Naive thymus-derived CD4-positive, alpha-beta T cell (primary cell): ENCODE measurements at regions of chr7 and their contacts with region 1.

Region 1: GRCh38 chr7:38318803-38319416 is 45.5 kb upstream of the TARP start:
- DNase-seq: no peak
- ATAC-seq: peak; percentile 58
- H3K4me3 ChIP-seq: no peak overlapping the region
- H3K4me3 Mint-ChIP-seq: peak overlapping the region in 8 of 10 donors; percentile 2 to 77 (median 46)
- H3K27ac ChIP-seq: no peak overlapping the region
- H3K27ac Mint-ChIP-seq: peak overlapping the region; percentile 34 to 92 (median 81)
- H3K4me1 ChIP-seq: peaks cover 23 to 24% of the 10 kb centered on the region in 2 donors
- H3K4me1 Mint-ChIP-seq: peaks cover 5 to 50% (median 32%) of the 10 kb centered on the region in 7 donors
- H3K27me3 ChIP-seq: no peaks in the 10 kb centered on the region
- H3K27me3 Mint-ChIP-seq: no peaks in the 10 kb centered on the region

Region 2: DNA sequence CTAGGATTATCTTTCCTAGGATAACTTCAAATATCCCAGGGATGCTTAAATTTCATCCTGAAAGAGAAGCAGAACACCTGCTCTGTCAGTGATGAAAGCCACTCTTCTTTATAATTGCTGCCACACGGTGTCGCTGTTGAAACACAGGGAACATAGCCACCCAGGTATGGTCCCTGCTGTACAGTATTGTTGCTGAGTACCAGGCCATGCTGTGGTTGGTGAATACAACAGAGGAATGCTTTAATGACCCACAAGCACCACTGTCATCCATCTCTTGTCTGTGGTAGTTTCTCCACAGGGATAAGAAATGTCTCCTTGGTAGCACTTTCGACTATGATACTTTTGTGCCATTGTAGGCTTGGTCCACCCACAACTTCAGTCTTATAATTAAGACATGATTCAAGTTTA is 211.4 kb before region 1 on chr7:
- CTCF ChIA-PET with region 1: interaction called, 3 read pairs
- POLR2A ChIA-PET with region 1: no interaction called
- intact Hi-C with region 1: loop called (anchors 1 kb)
- DNase-seq: peak; percentile 16 to 58 (median 44)
- ATAC-seq: peak; percentile 88
- H3K4me3 ChIP-seq: no peak overlapping the region
- H3K4me3 Mint-ChIP-seq: no peak overlapping the region
- H3K27ac ChIP-seq: no peak overlapping the region
- H3K27ac Mint-ChIP-seq: no peak overlapping the region
- H3K4me1 ChIP-seq: no peaks in the 10 kb centered on the region
- H3K4me1 Mint-ChIP-seq: peaks cover 0 to 2% (median 0%) of the 10 kb centered on the region in 7 donors
- H3K27me3 ChIP-seq: no peaks in the 10 kb centered on the region
- H3K27me3 Mint-ChIP-seq: peaks cover 18 to 43% (median 23%) of the 10 kb centered on the region in 5 donors

Region 3: DNA sequence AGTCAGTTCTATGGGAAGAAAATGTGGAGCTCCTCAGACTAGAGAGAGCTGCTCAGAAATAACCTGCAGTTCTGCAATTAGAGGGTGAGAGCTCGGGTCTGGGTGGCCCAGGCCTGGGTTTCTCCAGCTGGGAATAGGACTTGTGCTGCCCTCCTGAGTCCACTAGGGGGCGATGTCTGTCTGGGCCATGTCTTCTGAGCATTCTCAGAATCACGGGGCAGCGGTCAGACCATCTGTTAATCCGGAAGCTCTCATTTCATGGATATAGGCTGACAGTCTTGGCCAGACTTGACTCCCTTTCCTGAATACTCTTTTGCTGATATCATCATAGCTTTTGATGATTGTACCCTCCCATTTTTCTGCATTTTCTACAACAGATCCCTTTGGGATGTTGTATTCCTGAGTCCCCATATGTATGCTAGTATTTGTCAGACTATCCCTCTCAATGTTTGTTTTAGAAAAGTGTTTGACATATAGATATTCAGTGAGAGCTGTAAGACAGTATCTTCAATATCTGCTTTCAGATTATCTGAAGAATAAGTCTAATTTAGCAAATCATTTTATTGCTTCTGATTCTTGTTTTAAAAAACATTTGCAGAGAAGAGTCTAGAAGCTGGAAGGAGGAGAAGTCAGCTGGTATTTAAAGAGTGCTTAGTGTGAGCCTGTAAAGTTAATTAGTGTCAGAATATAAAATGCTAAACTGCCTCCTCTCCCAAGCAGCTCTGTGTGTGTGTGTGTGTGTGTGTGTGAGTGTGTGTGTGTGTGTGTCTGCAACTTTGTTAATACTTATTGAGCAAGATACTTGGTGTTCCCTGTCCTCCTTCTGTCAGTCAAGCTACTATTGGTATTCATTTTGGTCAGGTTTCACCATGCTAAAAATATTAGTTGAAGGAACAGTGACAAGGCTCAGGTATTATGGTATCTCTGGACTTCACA is 102.9 kb before region 1 on chr7:
- CTCF ChIA-PET with region 1: interaction called, 20 read pairs
- POLR2A ChIA-PET with region 1: no interaction called
- intact Hi-C with region 1: loop called (anchors 1 kb)
- DNase-seq: peak; percentile 50 to 73 (median 65)
- ATAC-seq: peak; percentile 95
- H3K4me3 ChIP-seq: no peak overlapping the region
- H3K4me3 Mint-ChIP-seq: peak overlapping the region in 5 of 10 donors; percentile 1 to 45 (median 27)
- H3K27ac ChIP-seq: peak overlapping the region; percentile 27
- H3K27ac Mint-ChIP-seq: peak overlapping the region in 7 of 9 donors; percentile 5 to 72 (median 47)
- H3K4me1 ChIP-seq: peaks cover 8 to 57% of the 10 kb centered on the region in 2 donors
- H3K4me1 Mint-ChIP-seq: peaks cover 7 to 34% (median 10%) of the 10 kb centered on the region in 7 donors
- H3K27me3 ChIP-seq: no peaks in the 10 kb centered on the region
- H3K27me3 Mint-ChIP-seq: no peaks in the 10 kb centered on the region

Region 4: GRCh38 chr7:38222481-38223096 is 96.3 kb before region 1 on chr7:
- CTCF ChIA-PET with region 1: interaction called, 20 read pairs
- POLR2A ChIA-PET with region 1: no interaction called
- intact Hi-C with region 1: loop called in 1 of 2 experiments (anchors 2 kb)
- DNase-seq: peak in 7 of 9 donors; percentile 34 to 68 (median 61)
- ATAC-seq: peak; percentile 80
- H3K4me3 ChIP-seq: no peak overlapping the region
- H3K4me3 Mint-ChIP-seq: peak overlapping the region in 1 of 10 donors; percentile 30
- H3K27ac ChIP-seq: no peak overlapping the region
- H3K27ac Mint-ChIP-seq: peak overlapping the region in 5 of 9 donors; percentile 0 to 39 (median 13)
- H3K4me1 ChIP-seq: peaks cover 0 to 70% of the 10 kb centered on the region in 2 donors
- H3K4me1 Mint-ChIP-seq: peaks cover 4 to 38% (median 7%) of the 10 kb centered on the region in 7 donors
- H3K27me3 ChIP-seq: no peaks in the 10 kb centered on the region
- H3K27me3 Mint-ChIP-seq: no peaks in the 10 kb centered on the region

Region 5: GRCh38 chr7:38274486-38274885 is 44.4 kb before region 1 on chr7:
- CTCF ChIA-PET with region 1: no interaction called
- POLR2A ChIA-PET with region 1: no interaction called
- intact Hi-C with region 1: loop called in 1 of 2 experiments (anchors 5 kb)
- DNase-seq: no peak
- ATAC-seq: peak; percentile 38
- H3K4me3 ChIP-seq: no peak overlapping the region
- H3K4me3 Mint-ChIP-seq: peak overlapping the region in 1 of 10 donors; percentile 55
- H3K27ac ChIP-seq: no peak overlapping the region
- H3K27ac Mint-ChIP-seq: no peak overlapping the region
- H3K4me1 ChIP-seq: no peaks in the 10 kb centered on the region
- H3K4me1 Mint-ChIP-seq: no peaks in the 10 kb centered on the region
- H3K27me3 ChIP-seq: no peaks in the 10 kb centered on the region
- H3K27me3 Mint-ChIP-seq: no peaks in the 10 kb centered on the region

Region 6: GRCh38 chr7:38300175-38300574 is 18.7 kb before region 1 on chr7:
- CTCF ChIA-PET with region 1: no interaction called
- POLR2A ChIA-PET with region 1: interaction called, 4 read pairs
- intact Hi-C with region 1: loop called in 1 of 2 experiments (anchors 2 kb)
- DNase-seq: no peak
- ATAC-seq: peak; percentile 40
- H3K4me3 ChIP-seq: peak overlapping the region; percentile 50
- H3K4me3 Mint-ChIP-seq: peak overlapping the region; percentile 58 to 84 (median 81)
- H3K27ac ChIP-seq: peak overlapping the region; percentile 14
- H3K27ac Mint-ChIP-seq: peak overlapping the region in 8 of 9 donors; percentile 42 to 88 (median 70)
- H3K4me1 ChIP-seq: no peaks in the 10 kb centered on the region
- H3K4me1 Mint-ChIP-seq: peaks cover 0 to 10% (median 6%) of the 10 kb centered on the region in 7 donors
- H3K27me3 ChIP-seq: no peaks in the 10 kb centered on the region
- H3K27me3 Mint-ChIP-seq: no peaks in the 10 kb centered on the region

Region 7: DNA sequence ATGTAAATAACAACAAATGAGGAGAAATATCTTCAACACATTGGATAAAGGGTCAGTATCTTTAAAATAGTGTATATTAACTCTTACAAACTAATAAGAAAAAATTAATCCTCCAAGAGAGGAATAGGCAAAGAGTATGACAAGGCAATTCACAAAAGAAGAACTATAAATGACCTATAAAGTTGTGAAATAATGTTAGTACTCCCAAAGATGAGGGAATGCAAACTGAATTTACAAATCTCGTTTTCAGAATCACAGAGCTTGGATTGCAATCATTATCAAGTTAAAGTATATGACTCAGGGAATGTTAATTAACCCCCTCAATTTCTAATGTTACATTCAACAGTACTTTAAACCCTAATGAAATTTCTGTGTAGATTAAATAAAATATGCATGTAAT is 41.9 kb after region 1 on chr7:
- CTCF ChIA-PET with region 1: no interaction called
- POLR2A ChIA-PET with region 1: no interaction called
- intact Hi-C with region 1: loop called in 1 of 2 experiments (anchors 1 kb)
- DNase-seq: no peak
- ATAC-seq: no peak
- H3K4me3 ChIP-seq: no peak overlapping the region
- H3K4me3 Mint-ChIP-seq: peak overlapping the region; percentile 64 to 100 (median 94)
- H3K27ac ChIP-seq: peak overlapping the region; percentile 58
- H3K27ac Mint-ChIP-seq: peak overlapping the region in 8 of 9 donors; percentile 70 to 99 (median 95)
- H3K4me1 ChIP-seq: peaks cover 15 to 24% of the 10 kb centered on the region in 2 donors
- H3K4me1 Mint-ChIP-seq: peaks cover 28 to 82% (median 49%) of the 10 kb centered on the region in 7 donors
- H3K27me3 ChIP-seq: no peaks in the 10 kb centered on the region
- H3K27me3 Mint-ChIP-seq: no peaks in the 10 kb centered on the region